ENCODE measurements at regions of chr17 and their contacts with region 1.

Region 1: GRCh38 chr17:76208120-76208519 is 32.2 kb downstream of the RNF157 start:
- DNase-seq: peak; percentile 67
- ATAC-seq: peak; percentile 81
- H3K4me3 Mint-ChIP-seq: no peak overlapping the region
- H3K27ac Mint-ChIP-seq: peak overlapping the region; percentile 86
- H3K4me1 Mint-ChIP-seq: peaks cover 67% of the 10 kb centered on the region
- H3K27me3 Mint-ChIP-seq: no peaks in the 10 kb centered on the region

Region 2: GRCh38 chr17:76072148-76072858 is 135.8 kb before region 1 on chr17 and contains the start of gene SRP68:
- CTCF ChIA-PET with region 1: no interaction called
- DNase-seq: peak; percentile 92
- ATAC-seq: peak; percentile 95
- H3K4me3 Mint-ChIP-seq: peak within 1 kb of the TSS; percentile 94
- H3K27ac Mint-ChIP-seq: peak within 1 kb of the TSS; percentile 91
- H3K4me1 Mint-ChIP-seq: peaks cover 42% of the 10 kb centered on the region
- H3K27me3 Mint-ChIP-seq: peaks cover 36% of the 10 kb centered on the region
- total RNA-seq, gene SRP68: 92.0 to 116 TPM

Region 3: DNA sequence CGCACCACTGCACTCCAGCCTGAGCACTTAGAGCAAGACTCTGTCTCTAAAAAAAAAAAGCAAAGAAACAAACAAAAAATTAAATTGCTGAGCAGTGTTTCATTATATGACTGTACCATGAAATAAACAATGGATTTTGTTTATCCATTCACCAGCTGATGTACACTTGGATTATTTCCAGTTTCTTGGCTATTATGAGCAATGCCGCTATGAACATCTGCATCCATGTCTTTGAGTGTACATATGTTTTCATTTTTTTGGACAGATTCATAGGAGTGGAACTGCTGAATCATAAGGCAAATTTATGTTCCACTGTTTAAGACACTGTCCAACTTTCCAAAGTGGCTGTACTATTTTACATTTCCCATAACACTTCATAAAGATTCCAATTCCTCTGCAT is 24.2 kb after region 1 on chr17:
- CTCF ChIA-PET with region 1: interaction called, 12 read pairs
- DNase-seq: no peak
- ATAC-seq: no peak
- H3K4me3 Mint-ChIP-seq: no peak overlapping the region
- H3K27ac Mint-ChIP-seq: no peak overlapping the region
- H3K4me1 Mint-ChIP-seq: peaks cover 61% of the 10 kb centered on the region
- H3K27me3 Mint-ChIP-seq: no peaks in the 10 kb centered on the region

Region 4: GRCh38 chr17:76246080-76247066 is 38.3 kb after region 1 on chr17:
- CTCF ChIA-PET with region 1: interaction called, 11 read pairs
- DNase-seq: peak; percentile 94
- ATAC-seq: peak; percentile 98
- H3K4me3 Mint-ChIP-seq: peak overlapping the region; percentile 50
- H3K27ac Mint-ChIP-seq: peak overlapping the region; percentile 90
- H3K4me1 Mint-ChIP-seq: peaks cover 73% of the 10 kb centered on the region
- H3K27me3 Mint-ChIP-seq: no peaks in the 10 kb centered on the region